Right ventricle myocardium superior (tissue), 1 donor: ENCODE measurements at regions of chr14 and their contacts with region 1.

Region 1: DNA sequence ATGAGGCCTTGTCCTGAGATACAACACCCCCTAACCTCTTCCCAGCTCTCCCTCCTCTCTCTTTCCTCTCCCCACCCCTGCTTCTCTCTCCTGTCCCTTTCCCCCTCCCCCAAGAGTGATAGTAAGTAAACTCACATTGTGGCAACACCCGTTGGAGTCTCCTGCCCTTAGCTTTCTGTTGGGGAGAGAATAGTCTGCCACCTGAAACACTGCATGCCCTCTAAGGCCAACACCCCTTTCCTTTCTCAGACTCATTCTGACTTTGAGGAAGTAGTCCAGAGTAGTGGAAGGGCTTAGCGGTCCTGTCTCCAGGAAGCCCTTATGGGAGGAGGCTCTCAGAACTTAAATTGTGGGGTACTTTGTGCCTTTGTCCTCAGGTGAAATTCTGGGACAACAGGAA is 95.2 kb downstream of the PRKCH start:
- DNase-seq: no peak
- ATAC-seq: no peak

Region 2: DNA sequence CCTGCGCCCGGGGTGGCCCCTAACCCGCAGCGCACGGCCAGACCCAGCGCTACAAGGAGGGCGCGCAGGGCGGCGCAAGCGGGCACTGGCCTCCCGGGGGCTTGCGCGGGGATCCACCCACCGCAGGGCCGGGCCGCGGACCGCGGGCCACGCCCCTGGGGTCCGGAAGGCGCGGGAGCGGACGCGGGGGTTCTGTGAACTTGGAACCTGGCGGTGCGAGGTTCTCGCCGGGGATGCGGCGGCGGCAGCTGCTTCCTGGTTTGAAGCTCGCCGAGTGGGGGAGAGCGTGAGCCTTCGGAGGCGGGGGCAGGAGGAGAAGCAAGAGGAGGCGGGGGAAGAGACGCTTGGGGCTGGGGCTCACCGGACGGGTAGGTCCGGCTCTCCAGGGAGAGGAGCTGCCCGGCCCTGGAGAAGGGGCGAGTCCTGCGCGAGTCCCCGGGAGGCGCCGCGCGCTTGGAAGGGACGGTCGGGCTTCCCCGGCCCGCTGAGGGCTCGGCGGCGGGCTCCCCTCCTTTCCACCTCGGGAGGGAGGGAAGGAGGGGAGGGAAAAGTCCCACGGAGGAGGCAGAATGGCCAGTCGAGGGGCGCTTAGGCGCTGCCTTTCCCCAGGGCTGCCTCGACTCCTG is 95.1 kb before region 1 on chr14 and contains the start of gene PRKCH:
- intact Hi-C with region 1: loop called (anchors 10 kb)
- DNase-seq: peak; percentile 84
- ATAC-seq: peak; percentile 82
- total RNA-seq, gene PRKCH: 14.5 TPM

Region 3: GRCh38 chr14:61512026-61512834 is 95.6 kb after region 1 on chr14:
- intact Hi-C with region 1: no loop called
- DNase-seq: no peak
- ATAC-seq: no peak

Region 4: GRCh38 chr14:61641914-61642613 is 225.5 kb after region 1 on chr14:
- intact Hi-C with region 1: no loop called
- DNase-seq: no peak
- ATAC-seq: no peak